Ascending aorta (tissue), 2 donors: ENCODE measurements at regions of chr5 and their contacts with region 1.

Region 1: DNA sequence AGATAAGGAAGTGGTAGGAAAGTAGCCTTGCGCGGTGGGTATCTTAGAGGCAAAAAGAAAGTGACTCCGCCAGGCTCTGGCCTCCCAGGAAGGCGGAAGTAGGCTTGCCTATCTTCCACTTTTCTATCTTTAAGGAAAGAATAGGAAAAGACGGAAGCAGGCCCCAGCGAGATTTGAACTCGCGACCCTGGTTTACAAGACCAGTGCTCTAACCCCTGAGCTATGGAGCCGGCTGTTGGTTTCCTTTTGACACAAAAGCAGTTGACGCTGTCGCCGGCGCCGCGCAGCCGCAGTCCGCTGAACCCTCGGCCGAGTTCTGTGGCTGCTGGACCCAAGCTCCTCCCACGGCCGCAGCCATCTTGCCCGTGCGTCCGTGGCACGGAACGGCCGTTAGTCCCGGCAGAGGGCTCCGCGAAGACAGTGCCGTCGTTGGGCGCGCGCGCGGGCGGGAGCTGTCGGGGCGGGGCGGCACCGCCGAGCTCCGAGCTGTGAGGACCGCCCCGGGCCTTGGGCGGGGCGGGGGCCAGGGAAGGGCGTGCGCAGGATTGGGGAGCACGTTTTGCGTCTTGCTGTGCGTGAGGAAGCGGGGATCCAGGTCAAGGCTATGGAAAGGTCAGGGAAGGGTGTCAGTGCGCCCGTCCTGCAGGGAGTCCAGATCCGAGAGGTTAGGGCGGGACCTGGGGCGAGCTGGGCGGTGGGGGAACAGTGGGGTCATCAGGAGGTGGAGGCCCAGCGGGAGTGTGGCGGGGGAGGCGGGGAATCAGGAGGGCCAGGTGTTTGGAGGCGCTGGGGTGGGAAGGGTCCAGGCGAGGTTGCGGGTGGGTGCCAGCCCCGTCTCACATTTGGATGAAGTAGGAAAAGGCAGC is 13.2 kb downstream of the TRIM7 start:
- DNase-seq: peak; percentile 86 to 98
- H3K4me3 ChIP-seq: peak overlapping the region; percentile 61 to 84
- H3K27ac ChIP-seq: peak overlapping the region; percentile 82 to 88
- H3K4me1 ChIP-seq: peaks cover 3 to 10% of the 10 kb centered on the region in 2 donors
- H3K27me3 ChIP-seq: no peaks in the 10 kb centered on the region
- CTCF ChIP-seq: no peak

Region 2: DNA sequence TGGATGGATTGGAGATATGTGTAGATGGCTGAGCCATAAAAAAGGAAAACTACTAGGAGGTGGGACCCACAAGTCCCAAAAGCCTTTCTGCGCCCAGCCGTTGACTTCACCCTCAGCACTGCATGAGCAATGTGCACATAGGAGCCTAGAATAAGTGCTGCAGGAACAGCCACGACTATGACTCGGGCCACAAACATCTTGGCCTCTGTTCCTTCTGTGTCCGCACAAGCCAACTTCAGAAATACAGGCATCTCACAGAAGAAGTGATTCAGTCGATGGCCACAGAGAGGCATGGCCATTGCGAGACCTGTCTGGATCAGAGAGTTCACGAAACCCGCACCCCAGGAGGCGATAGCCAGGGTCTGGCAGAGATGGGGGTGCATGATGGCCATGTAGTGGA is 452.5 kb before region 1 on chr5:
- intact Hi-C with region 1: no loop called
- DNase-seq: no peak
- H3K4me3 ChIP-seq: no peak overlapping the region
- H3K27ac ChIP-seq: no peak overlapping the region
- H3K4me1 ChIP-seq: no peaks in the 10 kb centered on the region
- H3K27me3 ChIP-seq: no peaks in the 10 kb centered on the region
- CTCF ChIP-seq: no peak

Region 3: DNA sequence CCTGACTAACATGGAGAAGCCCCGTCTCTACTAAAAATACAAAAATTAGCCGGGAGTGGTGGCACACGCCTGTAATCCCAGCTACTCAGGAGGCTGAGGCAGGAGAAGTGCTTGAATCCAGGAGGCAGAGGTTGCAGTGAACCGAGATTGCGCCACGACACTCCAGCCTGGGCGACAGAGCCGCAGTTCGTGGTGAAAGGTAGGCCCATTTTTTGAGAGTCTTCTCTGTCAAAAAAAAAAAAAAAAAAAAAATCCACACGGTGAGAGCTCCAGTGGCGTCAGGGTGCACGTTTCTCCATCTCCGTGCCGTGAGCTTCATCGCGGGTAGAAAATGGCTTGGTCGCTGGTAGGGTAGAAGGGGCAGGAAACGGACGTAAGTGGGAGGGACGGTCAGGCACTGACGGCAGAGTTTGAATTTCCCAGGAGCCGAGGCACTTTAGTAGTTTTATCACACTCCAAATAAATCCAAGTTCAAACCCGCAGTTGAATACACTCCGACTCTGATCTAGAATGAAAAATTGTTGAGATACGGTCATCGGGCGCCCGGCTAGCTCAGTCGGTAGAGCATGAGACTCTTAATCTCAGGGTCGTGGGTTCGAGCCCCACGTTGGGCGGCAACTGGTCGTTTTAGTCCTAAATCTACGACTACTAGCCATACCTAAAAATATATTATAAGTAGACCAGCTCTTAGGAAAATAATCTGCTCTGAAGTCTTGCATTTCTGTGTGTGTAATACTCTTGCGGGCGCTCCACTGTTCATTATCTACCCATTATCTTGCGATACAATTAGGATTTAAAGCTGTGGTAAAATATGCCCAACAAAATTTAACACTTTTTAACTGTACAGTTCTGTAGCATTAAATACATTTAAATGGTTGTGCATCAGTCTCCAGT is 15.7 kb after region 1 on chr5:
- intact Hi-C with region 1: loop called (anchors 1 kb)
- DNase-seq: peak in 1 of 2 donors; percentile 90
- H3K4me3 ChIP-seq: peak overlapping the region; percentile 53 to 72
- H3K27ac ChIP-seq: peak overlapping the region; percentile 87 to 88
- H3K4me1 ChIP-seq: peaks cover 4 to 13% of the 10 kb centered on the region in 2 donors
- H3K27me3 ChIP-seq: no peaks in the 10 kb centered on the region
- CTCF ChIP-seq: no peak

Region 4: DNA sequence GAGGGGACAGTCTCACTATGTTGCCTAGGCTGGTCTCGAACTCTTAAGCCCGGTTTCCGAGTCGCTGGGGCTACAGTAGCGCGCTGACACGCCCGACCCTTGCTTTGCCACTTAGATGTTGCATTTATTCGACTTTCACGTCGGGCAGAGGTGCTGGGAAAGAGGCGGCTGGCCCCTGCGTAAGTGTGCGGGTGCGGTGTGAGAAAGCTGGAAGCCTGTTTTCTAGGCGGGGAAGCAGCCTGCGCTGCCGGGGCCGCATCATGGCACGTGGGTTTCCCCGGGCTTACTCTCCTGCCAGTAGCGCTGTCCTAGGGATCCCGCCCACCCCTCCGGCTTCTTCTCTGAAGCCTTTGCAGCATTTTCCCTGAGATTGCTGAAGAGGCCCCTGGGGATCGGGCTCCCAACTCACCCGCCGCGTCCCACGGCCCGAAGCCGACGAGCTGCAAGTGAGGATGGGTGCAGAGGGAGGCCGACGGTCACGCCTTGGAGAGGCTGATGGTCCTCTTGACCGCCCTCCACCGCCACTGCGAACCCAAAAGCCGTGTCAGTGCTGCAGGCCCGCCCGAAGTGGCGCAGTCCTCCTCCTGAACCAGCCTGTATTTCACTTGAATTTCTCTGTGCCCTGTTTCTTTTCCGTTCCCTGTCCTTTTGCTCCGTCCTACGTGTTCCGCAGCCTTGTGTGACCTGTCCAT is 25.5 kb after region 1 on chr5:
- intact Hi-C with region 1: loop called (anchors 1 kb)
- DNase-seq: peak in 1 of 2 donors; percentile 77
- H3K4me3 ChIP-seq: peak overlapping the region; percentile 27 to 68
- H3K27ac ChIP-seq: peak overlapping the region; percentile 58 to 75
- H3K4me1 ChIP-seq: peaks cover 0 to 2% of the 10 kb centered on the region in 2 donors
- H3K27me3 ChIP-seq: no peaks in the 10 kb centered on the region
- CTCF ChIP-seq: no peak

Region 5: DNA sequence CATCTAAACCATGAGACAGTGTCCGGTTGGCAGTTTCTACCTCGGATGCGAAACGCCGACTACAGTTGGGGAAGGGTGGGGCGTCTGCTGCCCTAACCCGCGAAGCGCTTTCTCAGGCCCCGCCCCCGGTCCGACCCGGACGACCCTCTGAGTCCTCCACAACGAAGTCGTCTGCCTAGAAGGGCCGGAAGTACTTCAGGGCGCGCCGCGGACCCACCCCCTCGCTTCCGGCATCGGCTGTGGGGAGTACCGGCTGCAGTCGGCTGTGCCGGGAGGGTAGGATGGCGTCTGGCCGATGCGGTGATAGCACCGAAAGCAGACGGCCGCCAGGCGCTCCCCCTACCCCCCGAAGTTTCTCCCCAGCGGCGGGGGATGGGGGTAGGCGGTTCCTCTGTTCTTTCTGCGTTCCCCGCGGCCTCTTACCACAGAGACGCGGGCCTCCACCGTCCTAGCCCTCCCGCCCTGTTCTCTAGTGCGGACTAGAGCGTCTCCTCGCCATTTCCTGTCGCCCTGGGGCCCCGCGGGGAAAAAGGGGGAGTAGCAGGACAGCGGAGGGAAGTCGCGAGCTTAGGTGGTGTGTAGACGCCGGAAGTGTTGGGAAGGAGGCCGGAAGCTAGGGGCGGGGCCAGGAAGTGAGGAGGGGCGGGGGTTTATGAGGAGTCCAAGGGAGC is 31.4 kb after region 1 on chr5 and contains the start of gene TRIM41:
- intact Hi-C with region 1: loop called (anchors 1 kb)
- DNase-seq: peak; percentile 94 to 99
- H3K4me3 ChIP-seq: peak within 1 kb of the TSS; percentile 79 to 81
- H3K27ac ChIP-seq: peak within 1 kb of the TSS; percentile 93 to 94
- H3K4me1 ChIP-seq: peaks cover 6 to 7% of the 10 kb centered on the region in 2 donors
- H3K27me3 ChIP-seq: no peaks in the 10 kb centered on the region
- CTCF ChIP-seq: no peak
- total RNA-seq, gene TRIM41: 105 TPM

Region 6: DNA sequence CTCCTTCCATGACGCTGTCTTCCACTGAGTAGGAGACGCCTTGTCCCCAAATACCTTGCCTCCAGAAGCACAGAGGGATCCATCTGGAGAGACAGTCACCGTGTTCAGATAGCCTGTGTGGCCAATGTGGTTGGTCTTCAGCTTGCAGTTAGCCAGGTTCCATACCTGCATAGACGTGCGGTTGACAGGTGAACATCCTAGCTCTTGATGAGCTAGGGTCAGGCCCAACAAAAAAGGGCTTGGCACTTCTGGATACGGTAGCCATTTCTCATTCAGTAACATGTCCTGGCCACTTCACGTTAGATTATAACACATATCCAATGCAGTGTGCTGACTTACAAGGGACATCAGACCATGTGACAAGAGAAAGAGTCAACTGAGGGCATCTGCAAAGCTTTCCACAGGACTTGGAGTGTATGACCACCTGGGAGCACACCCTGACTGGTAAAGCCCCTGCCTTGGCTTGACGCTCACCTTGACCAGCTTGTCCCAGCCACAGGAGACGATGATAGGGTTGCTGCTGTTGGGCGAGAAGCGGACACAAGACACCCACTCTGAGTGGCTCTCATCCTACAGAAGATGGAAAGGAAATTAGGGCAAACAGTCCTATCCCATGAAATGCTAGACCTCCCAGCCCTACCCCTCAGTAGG is 47.4 kb after region 1 on chr5:
- intact Hi-C with region 1: no loop called
- DNase-seq: no peak
- H3K4me3 ChIP-seq: no peak overlapping the region
- H3K27ac ChIP-seq: no peak overlapping the region
- H3K4me1 ChIP-seq: peaks cover 14 to 23% of the 10 kb centered on the region in 2 donors
- H3K27me3 ChIP-seq: no peaks in the 10 kb centered on the region
- CTCF ChIP-seq: no peak

Region 7: GRCh38 chr5:181260387-181261319 is 68.9 kb after region 1 on chr5 and contains the start of gene TRIM52:
- intact Hi-C with region 1: loop called (anchors 5 kb)
- DNase-seq: peak; percentile 56 to 95
- H3K4me3 ChIP-seq: peak within 1 kb of the TSS; percentile 74 to 99
- H3K27ac ChIP-seq: peak within 1 kb of the TSS; percentile 97 to 100
- H3K4me1 ChIP-seq: peaks cover 2 to 27% of the 10 kb centered on the region in 2 donors
- H3K27me3 ChIP-seq: no peaks in the 10 kb centered on the region
- CTCF ChIP-seq: peak in 1 of 3 experiments; percentile 9
- total RNA-seq, gene TRIM52: 21.2 TPM